ENCODE measurements at regions of chr7 and their contacts with region 1.

Region 1: GRCh38 chr7:130440527-130441365 is at the start of gene CEP41:
- DNase-seq: peak; percentile 85 to 90 (median 89)
- ATAC-seq: peak; percentile 98
- H3K4me3 ChIP-seq: peak within 1 kb of the TSS; percentile 87
- H3K4me3 Mint-ChIP-seq: peak within 1 kb of the TSS; percentile 95 to 100 (median 98)
- H3K27ac ChIP-seq: peak within 1 kb of the TSS; percentile 76
- H3K27ac Mint-ChIP-seq: peak within 1 kb of the TSS; percentile 95 to 99 (median 96)
- H3K4me1 ChIP-seq: peaks cover 4 to 26% of the 10 kb centered on the region in 2 donors
- H3K4me1 Mint-ChIP-seq: peaks cover 26 to 71% (median 59%) of the 10 kb centered on the region in 7 donors
- H3K27me3 ChIP-seq: no peaks in the 10 kb centered on the region
- H3K27me3 Mint-ChIP-seq: peaks cover 0 to 4% (median 0%) of the 10 kb centered on the region in 5 donors
- total RNA-seq, gene CEP41: 6.9 to 16.0 (median 12.6) TPM

Region 2: GRCh38 chr7:130124711-130125110 is 316.0 kb before region 1 on chr7:
- CTCF ChIA-PET with region 1: no interaction called
- POLR2A ChIA-PET with region 1: no interaction called
- intact Hi-C with region 1: no loop called
- DNase-seq: no peak
- ATAC-seq: no peak
- H3K4me3 ChIP-seq: no peak overlapping the region
- H3K4me3 Mint-ChIP-seq: no peak overlapping the region
- H3K27ac ChIP-seq: no peak overlapping the region
- H3K27ac Mint-ChIP-seq: no peak overlapping the region
- H3K4me1 ChIP-seq: no peaks in the 10 kb centered on the region
- H3K4me1 Mint-ChIP-seq: peaks cover 0 to 2% (median 0%) of the 10 kb centered on the region in 7 donors
- H3K27me3 ChIP-seq: no peaks in the 10 kb centered on the region
- H3K27me3 Mint-ChIP-seq: no peaks in the 10 kb centered on the region

Region 3: DNA sequence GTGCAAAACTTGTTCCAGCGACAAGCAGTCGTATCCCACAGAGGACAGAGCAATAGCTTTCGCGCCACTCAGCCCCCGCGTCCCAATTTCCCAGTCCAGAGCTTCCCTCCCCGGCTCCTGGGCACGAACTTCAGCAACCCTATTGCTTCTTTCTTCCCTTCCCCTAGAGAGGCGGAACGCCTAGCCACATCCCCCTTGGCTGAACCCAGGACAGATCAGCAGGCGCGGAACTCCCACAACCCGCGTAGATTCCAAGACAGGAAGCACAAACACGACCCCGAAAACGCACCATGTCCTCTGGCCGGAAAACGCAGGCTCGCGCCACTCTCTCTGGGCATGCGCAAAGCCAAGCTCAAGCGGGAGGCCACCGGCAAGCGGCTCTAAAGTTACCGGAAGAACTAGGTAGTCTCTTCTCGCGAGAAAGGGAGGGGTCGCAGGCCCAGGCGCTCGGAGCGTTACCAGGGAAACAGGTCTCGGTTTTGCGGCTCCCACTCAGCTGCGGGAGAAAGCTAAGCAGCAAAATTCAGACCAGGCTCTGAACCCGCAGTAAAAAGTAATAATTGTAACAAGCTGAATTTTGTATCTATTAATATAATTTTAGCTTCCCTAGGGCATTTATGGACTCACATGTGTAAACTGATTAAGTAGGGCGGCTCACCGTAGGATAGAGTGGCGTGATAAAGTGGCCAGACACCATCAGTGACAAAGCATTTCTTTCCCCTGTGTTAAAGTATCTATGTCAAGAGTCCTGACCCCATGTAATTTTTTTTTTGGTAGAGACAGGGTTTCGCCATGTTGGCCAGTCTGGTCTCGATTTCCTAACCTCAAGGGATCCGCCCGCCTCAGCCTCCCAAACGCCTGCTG is 235.4 kb before region 1 on chr7 and contains the start of gene TMEM209:
- CTCF ChIA-PET with region 1: no interaction called
- POLR2A ChIA-PET with region 1: no interaction called
- intact Hi-C with region 1: loop called (anchors 5 kb)
- DNase-seq: peak; percentile 80 to 96 (median 93)
- ATAC-seq: peak; percentile 98
- H3K4me3 ChIP-seq: peak within 1 kb of the TSS; percentile 89
- H3K4me3 Mint-ChIP-seq: peak within 1 kb of the TSS; percentile 98 to 100 (median 100)
- H3K27ac ChIP-seq: peak within 1 kb of the TSS; percentile 83
- H3K27ac Mint-ChIP-seq: peak within 1 kb of the TSS; percentile 97 to 100 (median 99)
- H3K4me1 ChIP-seq: peaks cover 11 to 14% of the 10 kb centered on the region in 2 donors
- H3K4me1 Mint-ChIP-seq: peaks cover 13 to 43% (median 37%) of the 10 kb centered on the region in 7 donors
- H3K27me3 ChIP-seq: no peaks in the 10 kb centered on the region
- H3K27me3 Mint-ChIP-seq: peaks cover 0 to 9% (median 0%) of the 10 kb centered on the region in 5 donors
- total RNA-seq, gene TMEM209: 18.8 to 37.3 (median 35.1) TPM

Region 4: GRCh38 chr7:130421684-130422083 is 19.1 kb before region 1 on chr7:
- CTCF ChIA-PET with region 1: no interaction called
- POLR2A ChIA-PET with region 1: interaction called, 6 read pairs
- intact Hi-C with region 1: loop called in 1 of 2 experiments (anchors 1 kb)
- DNase-seq: no peak
- ATAC-seq: no peak
- H3K4me3 ChIP-seq: no peak overlapping the region
- H3K4me3 Mint-ChIP-seq: peak overlapping the region in 9 of 10 donors; percentile 10 to 75 (median 64)
- H3K27ac ChIP-seq: peak overlapping the region; percentile 23
- H3K27ac Mint-ChIP-seq: peak overlapping the region; percentile 6 to 94 (median 68)
- H3K4me1 ChIP-seq: peaks cover 0 to 68% of the 10 kb centered on the region in 2 donors
- H3K4me1 Mint-ChIP-seq: peaks cover 32 to 88% (median 85%) of the 10 kb centered on the region in 7 donors
- H3K27me3 ChIP-seq: no peaks in the 10 kb centered on the region
- H3K27me3 Mint-ChIP-seq: no peaks in the 10 kb centered on the region

Region 5: DNA sequence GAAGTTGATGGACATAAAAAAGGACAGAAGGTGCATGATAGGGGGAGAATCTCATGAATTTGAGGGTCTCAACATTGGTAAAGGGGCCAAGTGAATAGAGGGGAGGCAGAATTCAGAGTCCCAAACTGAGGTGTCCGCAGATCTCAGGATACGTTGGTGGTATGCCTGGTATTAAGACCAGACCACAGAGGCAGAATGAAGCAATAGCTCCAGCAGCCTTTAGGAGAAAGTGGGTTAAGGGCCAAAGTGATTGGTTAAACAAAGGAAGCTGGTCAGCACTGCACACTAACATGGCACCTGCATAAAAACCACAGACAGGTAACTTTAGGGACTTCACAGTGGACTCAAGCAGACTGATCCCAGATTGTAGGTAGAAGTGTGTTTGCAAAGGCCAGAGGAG is 88.7 kb after region 1 on chr7:
- CTCF ChIA-PET with region 1: no interaction called
- POLR2A ChIA-PET with region 1: no interaction called
- intact Hi-C with region 1: no loop called
- DNase-seq: no peak
- ATAC-seq: no peak
- H3K4me3 ChIP-seq: no peak overlapping the region
- H3K4me3 Mint-ChIP-seq: no peak overlapping the region
- H3K27ac ChIP-seq: no peak overlapping the region
- H3K27ac Mint-ChIP-seq: peak overlapping the region in 1 of 9 donors; percentile 30
- H3K4me1 ChIP-seq: no peaks in the 10 kb centered on the region
- H3K4me1 Mint-ChIP-seq: peaks cover 0 to 4% (median 0%) of the 10 kb centered on the region in 7 donors
- H3K27me3 ChIP-seq: no peaks in the 10 kb centered on the region
- H3K27me3 Mint-ChIP-seq: no peaks in the 10 kb centered on the region